Activated T-helper 1 cell treated with anti-CD3 and anti-CD28 coated beads, Interleukin-12 subunit alpha, Interleukin-12 subunit beta, Interleukin-2, Interleukin-4 antibody, amounts not matched to agents 30 ng/mL and 10 ng/mL and 1 ng/mL, durations not matched to agents 14 hours and 24 hours and 36 hours (primary cell): ENCODE measurements at regions of chr11 and their contacts with region 1.

Region 1: DNA sequence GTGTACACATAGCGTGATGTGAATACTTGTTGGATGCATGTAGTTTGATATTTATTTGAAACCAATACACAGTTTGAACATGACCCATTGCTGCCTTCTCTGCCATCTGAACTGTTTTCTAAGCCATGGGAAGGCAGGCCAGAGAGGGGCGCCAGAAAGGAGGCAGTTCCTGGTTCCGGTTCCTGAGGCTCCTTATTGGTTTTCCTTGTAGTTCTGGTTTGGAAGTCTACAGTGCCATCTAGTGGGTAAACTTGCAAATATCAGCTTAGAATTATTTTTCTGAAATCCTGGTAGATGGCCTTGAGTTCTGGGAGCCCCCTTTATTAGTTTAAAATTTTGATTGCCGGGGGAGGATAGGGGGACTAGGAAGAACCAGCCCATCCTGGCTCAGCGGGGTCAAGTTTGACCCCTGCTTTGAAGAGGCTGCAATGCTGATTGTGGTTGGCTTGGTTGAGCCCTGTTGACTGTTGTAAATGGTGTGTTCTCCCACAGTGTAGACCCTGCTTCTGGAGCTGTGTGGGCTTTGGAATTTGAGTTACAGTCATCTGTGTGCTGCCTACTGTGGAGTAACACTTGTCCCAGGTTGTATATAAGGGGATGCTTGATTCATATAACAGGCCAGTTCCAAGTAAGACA is 48.4 kb downstream of the GRAMD1B start:
- DNase-seq: peak; percentile 9
- H3K4me3 Mint-ChIP-seq: peak overlapping the region; percentile 32
- H3K27ac Mint-ChIP-seq: peak overlapping the region; percentile 70
- H3K4me1 Mint-ChIP-seq: peaks cover 78% of the 10 kb centered on the region
- H3K27me3 Mint-ChIP-seq: no peaks in the 10 kb centered on the region

Region 2: GRCh38 chr11:123166071-123166559 is 312.4 kb before region 1 on chr11:
- intact Hi-C with region 1: loop called (anchors 1 kb)
- DNase-seq: no peak
- H3K4me3 Mint-ChIP-seq: no peak overlapping the region
- H3K27ac Mint-ChIP-seq: no peak overlapping the region
- H3K4me1 Mint-ChIP-seq: no peaks in the 10 kb centered on the region
- H3K27me3 Mint-ChIP-seq: peaks cover 12% of the 10 kb centered on the region

Region 3: GRCh38 chr11:123357961-123358841 is 120.3 kb before region 1 on chr11:
- intact Hi-C with region 1: loop called (anchors 1 kb)
- DNase-seq: peak; percentile 53
- H3K4me3 Mint-ChIP-seq: peak overlapping the region; percentile 99
- H3K27ac Mint-ChIP-seq: peak overlapping the region; percentile 97
- H3K4me1 Mint-ChIP-seq: peaks cover 77% of the 10 kb centered on the region
- H3K27me3 Mint-ChIP-seq: no peaks in the 10 kb centered on the region

Region 4: DNA sequence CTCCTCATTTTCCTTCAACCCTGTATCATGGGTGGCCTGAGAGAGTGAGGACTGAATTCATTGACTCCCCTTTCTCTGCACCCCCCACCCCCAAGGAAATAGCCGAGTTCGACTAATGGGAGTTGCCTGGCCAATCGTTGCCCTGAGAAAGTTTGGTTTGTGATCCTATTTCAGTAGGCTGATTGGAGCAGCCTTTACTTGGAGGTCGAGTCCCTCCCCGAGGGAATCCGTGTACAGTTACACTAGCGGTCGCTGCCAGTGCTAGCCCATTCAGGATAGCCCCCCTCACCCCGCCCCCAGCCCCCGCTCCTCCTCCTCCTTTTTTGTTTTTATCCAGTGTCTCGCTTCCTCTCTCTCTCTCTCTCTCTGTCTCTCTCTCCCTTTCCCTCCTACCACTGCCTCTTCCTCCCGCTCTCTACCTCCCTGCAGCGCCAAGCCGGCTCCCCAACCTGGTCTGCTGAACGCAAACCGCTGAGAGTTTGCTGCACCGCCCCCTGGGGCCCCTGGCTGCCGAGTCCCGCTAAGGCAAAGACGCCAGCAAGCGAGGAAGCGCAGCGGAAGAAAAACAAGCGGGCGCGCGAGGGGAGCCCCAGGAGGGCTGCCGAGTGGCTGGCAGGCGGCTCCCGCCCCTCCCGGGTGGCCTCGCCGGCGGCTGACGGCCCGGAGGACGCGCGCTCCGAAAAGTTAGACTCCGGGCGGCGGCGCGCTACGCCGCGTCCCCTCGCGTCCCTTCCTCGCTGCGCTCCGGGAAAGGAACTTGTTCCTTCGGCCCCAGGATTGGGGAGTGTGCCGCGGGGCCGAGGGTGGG is 48.4 kb before region 1 on chr11 and contains the start of gene GRAMD1B:
- intact Hi-C with region 1: loop called (anchors 1 kb)
- DNase-seq: peak; percentile 78
- H3K4me3 Mint-ChIP-seq: peak within 1 kb of the TSS; percentile 91
- H3K27ac Mint-ChIP-seq: peak within 1 kb of the TSS; percentile 93
- H3K4me1 Mint-ChIP-seq: peaks cover 76% of the 10 kb centered on the region
- H3K27me3 Mint-ChIP-seq: no peaks in the 10 kb centered on the region
- total RNA-seq, gene GRAMD1B: 154 and 155 TPM in 2 replicates